ENCODE measurements at regions of chr1 and their contacts with region 1.

Region 1: DNA sequence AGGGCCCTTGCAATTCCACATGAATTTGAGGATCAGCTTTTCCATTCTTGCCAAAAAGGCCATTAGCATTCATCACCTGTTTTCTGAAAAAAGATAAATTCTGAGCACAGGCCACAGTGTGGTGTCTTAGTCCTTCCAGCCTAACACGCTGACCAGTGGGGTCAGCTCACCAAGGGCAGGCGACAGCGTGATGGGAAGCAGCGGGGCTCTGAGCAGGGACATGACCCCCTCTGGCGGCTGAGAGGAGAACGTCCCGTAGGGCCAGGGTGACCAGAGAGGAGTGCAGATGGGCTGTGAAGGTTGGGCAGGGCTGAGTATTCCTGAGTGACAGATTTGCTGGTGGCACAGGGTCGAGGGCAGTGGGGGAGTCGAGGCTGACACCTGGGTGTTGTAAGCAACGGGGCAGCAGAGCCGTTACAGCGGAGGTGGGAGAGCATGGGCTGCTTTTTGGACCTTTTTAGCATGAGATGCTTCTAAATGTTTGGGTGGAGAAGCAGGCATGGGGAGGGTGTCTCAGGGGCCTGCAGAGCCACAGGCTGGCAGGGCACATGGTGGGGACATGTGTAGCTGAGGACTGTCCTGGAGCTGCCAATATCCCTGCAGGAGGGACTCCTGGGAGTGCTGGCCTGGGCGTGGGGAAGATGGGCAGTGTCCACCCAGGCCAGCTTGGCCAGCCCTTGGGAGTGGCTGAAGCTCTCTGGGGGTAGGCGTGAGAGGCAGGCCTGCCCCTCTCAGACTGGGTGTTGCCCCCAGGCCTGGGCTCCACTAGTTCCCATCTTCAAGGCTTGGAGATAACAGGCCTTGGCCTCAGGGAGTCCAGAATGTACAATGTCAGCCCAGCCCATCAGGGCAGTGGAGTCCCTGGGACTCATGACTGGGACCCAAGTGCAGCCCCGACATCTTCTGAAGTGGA is 8.6 kb upstream of the CALML6 start:
- DNase-seq: peak; percentile 78
- H3K4me3 ChIP-seq: no peak overlapping the region
- H3K27ac ChIP-seq: no peak overlapping the region
- H3K4me1 ChIP-seq: peaks cover 11% of the 10 kb centered on the region
- H3K27me3 ChIP-seq: no peaks in the 10 kb centered on the region
- CTCF ChIP-seq: peak; percentile 97 to 98
- POLR2A ChIP-seq: no peak

Region 2: DNA sequence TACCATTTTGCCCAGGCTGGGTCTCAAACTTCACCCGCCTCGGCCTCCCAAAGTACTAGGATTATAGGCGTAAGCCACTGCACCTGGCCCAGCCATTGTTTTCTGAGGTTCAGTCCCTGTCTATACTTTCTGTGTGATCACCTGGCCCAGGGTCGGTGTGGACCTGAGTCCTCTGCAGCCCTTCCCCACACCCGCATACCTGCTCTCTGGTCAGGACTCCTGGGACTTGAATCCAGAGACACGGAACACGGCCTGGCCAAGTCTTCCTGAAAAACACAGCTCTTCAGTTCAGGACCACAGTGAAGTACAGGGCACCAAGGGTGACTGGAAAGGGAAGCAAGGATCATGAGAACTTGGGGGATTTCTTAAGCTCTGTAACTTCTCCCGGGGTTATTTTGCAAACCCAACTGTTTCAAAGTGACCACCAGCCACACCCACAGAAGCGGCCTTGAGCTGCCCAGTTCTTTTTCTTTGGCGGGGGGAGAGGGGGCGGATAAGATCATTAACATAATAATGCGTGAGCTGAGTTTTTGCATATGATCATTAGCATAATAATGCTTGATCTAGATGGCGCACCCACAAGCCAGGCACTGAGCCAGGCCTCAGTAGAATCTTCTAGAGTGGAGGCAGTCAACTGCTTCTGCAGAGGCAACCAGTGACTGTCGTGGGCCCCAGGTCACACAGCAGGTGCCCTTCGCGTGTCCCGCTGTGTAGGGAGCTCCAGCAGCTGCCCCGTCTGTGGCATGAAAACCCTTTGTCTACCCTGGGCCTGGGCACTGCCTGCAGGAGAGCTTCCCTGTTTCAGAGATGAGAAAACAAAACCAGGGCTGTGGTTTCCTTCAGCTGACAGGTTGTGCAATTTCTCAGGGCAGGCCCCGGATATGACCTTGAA is 126.5 kb before region 1 on chr1:
- CTCF ChIA-PET with region 1: interaction called, 11 read pairs
- POLR2A ChIA-PET with region 1: no interaction called
- dilution Hi-C with region 1: no loop called
- intact Hi-C with region 1: no loop called
- DNase-seq: no peak
- H3K4me3 ChIP-seq: no peak overlapping the region
- H3K27ac ChIP-seq: no peak overlapping the region
- H3K4me1 ChIP-seq: peaks cover 20% of the 10 kb centered on the region
- H3K27me3 ChIP-seq: no peaks in the 10 kb centered on the region
- CTCF ChIP-seq: no peak
- POLR2A ChIP-seq: no peak

Region 3: DNA sequence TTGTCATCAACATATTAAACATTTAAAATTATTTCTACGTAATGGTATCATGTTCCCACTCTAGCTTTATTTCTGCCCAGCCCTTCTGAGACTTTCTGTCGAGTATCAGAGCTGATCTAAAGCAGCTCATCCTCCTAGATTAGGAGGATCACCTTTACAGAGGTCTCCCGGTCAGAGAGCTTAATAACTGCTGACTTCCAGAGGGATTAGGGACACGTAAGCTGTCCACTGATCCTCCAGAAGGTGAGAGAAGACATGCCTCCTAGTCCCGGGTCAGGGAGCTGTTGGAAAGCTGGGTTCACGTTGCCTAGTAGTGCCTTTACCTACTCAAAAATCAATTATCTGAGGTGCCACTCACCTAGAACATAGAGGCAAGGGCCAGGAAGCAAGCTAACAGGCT is 97.0 kb before region 1 on chr1:
- CTCF ChIA-PET with region 1: interaction called, 15 read pairs
- POLR2A ChIA-PET with region 1: no interaction called
- dilution Hi-C with region 1: no loop called
- intact Hi-C with region 1: no loop called
- DNase-seq: no peak
- H3K4me3 ChIP-seq: no peak overlapping the region
- H3K27ac ChIP-seq: no peak overlapping the region
- H3K4me1 ChIP-seq: no peaks in the 10 kb centered on the region
- H3K27me3 ChIP-seq: no peaks in the 10 kb centered on the region
- CTCF ChIP-seq: no peak
- POLR2A ChIP-seq: no peak

Region 4: GRCh38 chr1:1847061-1847850 is 59.2 kb before region 1 on chr1:
- CTCF ChIA-PET with region 1: interaction called, 9 read pairs
- POLR2A ChIA-PET with region 1: no interaction called
- dilution Hi-C with region 1: no loop called
- intact Hi-C with region 1: loop called (anchors 2 kb)
- DNase-seq: peak; percentile 85
- H3K4me3 ChIP-seq: no peak overlapping the region
- H3K27ac ChIP-seq: peak overlapping the region; percentile 10
- H3K4me1 ChIP-seq: peaks cover 9% of the 10 kb centered on the region
- H3K27me3 ChIP-seq: no peaks in the 10 kb centered on the region
- CTCF ChIP-seq: no peak
- POLR2A ChIP-seq: no peak

Region 5: GRCh38 chr1:1890506-1891348 is 15.7 kb before region 1 on chr1 and contains the start of gene GNB1:
- CTCF ChIA-PET with region 1: interaction called, 12 read pairs
- POLR2A ChIA-PET with region 1: interaction called, 10 read pairs
- dilution Hi-C with region 1: no loop called
- intact Hi-C with region 1: loop called (anchors 1 kb)
- DNase-seq: peak; percentile 86
- H3K4me3 ChIP-seq: peak within 1 kb of the TSS; percentile 79 to 99 (median 99)
- H3K27ac ChIP-seq: peak within 1 kb of the TSS; percentile 83
- H3K4me1 ChIP-seq: peaks cover 22% of the 10 kb centered on the region
- H3K27me3 ChIP-seq: no peaks in the 10 kb centered on the region
- CTCF ChIP-seq: no peak
- POLR2A ChIP-seq: no peak
- total RNA-seq, gene GNB1: 519 and 529 TPM in 2 replicates

Region 6: GRCh38 chr1:2044510-2045319 is 138.3 kb after region 1 on chr1:
- CTCF ChIA-PET with region 1: interaction called, 16 read pairs
- POLR2A ChIA-PET with region 1: no interaction called
- dilution Hi-C with region 1: no loop called
- intact Hi-C with region 1: no loop called
- DNase-seq: peak; percentile 45
- H3K4me3 ChIP-seq: no peak overlapping the region
- H3K27ac ChIP-seq: no peak overlapping the region
- H3K4me1 ChIP-seq: no peaks in the 10 kb centered on the region
- H3K27me3 ChIP-seq: peaks cover 8 to 13% of the 10 kb centered on the region in 2 experiments
- CTCF ChIP-seq: peak; percentile 73 to 76
- POLR2A ChIP-seq: no peak

Region 7: GRCh38 chr1:2279210-2279639 is 372.8 kb after region 1 on chr1:
- CTCF ChIA-PET with region 1: no interaction called
- POLR2A ChIA-PET with region 1: no interaction called
- dilution Hi-C with region 1: no loop called
- intact Hi-C with region 1: no loop called
- DNase-seq: peak; percentile 98
- H3K4me3 ChIP-seq: no peak overlapping the region
- H3K27ac ChIP-seq: peak overlapping the region; percentile 70
- H3K4me1 ChIP-seq: peaks cover 24% of the 10 kb centered on the region
- H3K27me3 ChIP-seq: no peaks in the 10 kb centered on the region
- CTCF ChIP-seq: no peak
- POLR2A ChIP-seq: no peak